ENCODE measurements at regions of chr17 and their contacts with region 1.

Region 1: DNA sequence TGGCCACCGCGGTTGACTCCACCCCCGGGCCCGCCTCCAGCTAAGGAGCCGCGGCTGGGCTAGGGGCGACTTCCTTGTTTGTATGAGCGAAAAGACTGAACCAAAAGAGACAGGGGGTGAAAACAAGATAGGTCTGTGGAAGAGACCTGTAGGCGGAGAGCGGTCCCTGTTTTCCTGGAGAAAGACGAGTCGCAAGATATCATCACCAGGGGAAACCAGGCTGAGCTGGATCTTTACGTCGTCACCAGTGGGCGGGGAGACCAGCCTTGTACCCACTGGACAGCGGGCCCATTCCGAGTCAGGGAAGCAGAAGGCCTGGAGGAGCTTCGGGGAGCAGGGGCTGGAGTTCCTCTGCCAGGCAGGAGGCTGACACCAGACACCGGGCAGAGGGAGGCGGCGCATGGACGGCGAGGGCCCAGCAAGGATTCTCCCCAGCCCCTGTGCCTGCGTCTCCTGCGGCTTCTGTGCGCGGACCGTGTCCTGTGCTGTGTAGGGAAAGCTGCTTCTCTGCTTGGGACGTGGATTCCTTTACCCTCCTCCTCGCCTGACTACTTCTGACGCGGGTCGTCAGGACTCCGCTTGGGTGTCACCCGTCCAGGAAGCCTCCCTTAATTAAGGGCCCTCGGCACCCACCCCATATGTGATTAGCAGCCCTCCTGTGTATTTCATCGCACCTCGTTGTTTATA is 10.3 kb upstream of the ARL4D start:
- DNase-seq: peak; percentile 94
- H3K4me3 ChIP-seq: peak overlapping the region; percentile 57 to 71 (median 64)
- H3K27ac ChIP-seq: peak overlapping the region; percentile 98 to 99 (median 99)
- H3K4me1 ChIP-seq: peaks cover 6 to 21% (median 10%) of the 10 kb centered on the region in 4 donors
- H3K27me3 ChIP-seq: no peaks in the 10 kb centered on the region
- CTCF ChIP-seq: no peak
- EP300 ChIP-seq: no peak
- POLR2A ChIP-seq: peak; percentile 98

Region 2: GRCh38 chr17:43324205-43324893 is 64.2 kb before region 1 on chr17:
- in situ Hi-C with region 1: no loop called
- intact Hi-C with region 1: no loop called
- DNase-seq: no peak
- H3K4me3 ChIP-seq: no peak overlapping the region
- H3K27ac ChIP-seq: no peak overlapping the region
- H3K4me1 ChIP-seq: peaks cover 0 to 4% (median 0%) of the 10 kb centered on the region in 4 donors
- H3K27me3 ChIP-seq: peaks cover 8% of the 10 kb centered on the region
- CTCF ChIP-seq: no peak
- EP300 ChIP-seq: no peak
- POLR2A ChIP-seq: no peak

Region 3: GRCh38 chr17:43367737-43368242 is 20.7 kb before region 1 on chr17:
- in situ Hi-C with region 1: no loop called
- intact Hi-C with region 1: loop called (anchors 2 kb)
- DNase-seq: no peak
- H3K4me3 ChIP-seq: peak overlapping the region in 3 of 4 donors; percentile 49 to 72 (median 71)
- H3K27ac ChIP-seq: peak overlapping the region; percentile 98 to 100 (median 100)
- H3K4me1 ChIP-seq: peaks cover 13 to 29% (median 23%) of the 10 kb centered on the region in 4 donors
- H3K27me3 ChIP-seq: no peaks in the 10 kb centered on the region
- CTCF ChIP-seq: no peak
- EP300 ChIP-seq: no peak
- POLR2A ChIP-seq: no peak

Region 4: DNA sequence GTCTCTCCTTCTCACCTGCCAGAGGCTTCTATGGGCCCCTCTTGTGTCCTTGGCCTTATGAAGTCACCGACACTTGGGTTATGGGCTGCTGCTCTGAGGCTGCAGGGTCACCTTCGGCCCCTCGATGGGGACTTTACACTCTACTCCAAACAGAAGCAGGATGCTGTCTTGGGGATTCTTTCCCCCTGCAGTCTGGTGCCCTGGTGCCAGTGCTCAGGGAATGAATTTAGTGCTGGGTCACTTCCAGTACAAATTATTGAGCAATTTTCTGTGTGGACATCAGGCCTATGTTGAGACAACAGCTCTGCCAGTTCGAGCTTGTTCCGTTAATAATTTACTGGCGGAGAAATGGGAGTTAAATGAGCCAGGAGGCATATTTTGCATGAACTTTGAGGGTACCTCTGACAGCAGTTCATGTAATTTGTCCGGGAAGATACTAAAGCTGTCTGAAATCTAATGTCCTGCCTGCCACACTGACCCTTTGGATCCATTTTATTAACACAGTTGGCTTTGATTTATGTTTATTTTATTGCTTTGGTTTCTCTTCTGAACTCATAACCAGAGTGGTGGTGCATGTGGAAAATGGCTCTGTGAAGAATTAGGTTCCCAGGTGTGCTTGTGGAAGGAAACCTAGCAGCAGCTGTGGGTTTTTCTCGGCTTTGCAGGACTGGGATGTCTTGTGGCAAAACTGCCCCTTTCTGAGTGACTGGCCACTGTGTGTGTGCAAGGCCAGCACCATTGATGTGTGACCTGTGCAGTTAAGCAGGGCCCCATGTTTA is 61.2 kb after region 1 on chr17:
- in situ Hi-C with region 1: no loop called
- intact Hi-C with region 1: no loop called
- DNase-seq: no peak
- H3K4me3 ChIP-seq: no peak overlapping the region
- H3K27ac ChIP-seq: no peak overlapping the region
- H3K4me1 ChIP-seq: peaks cover 0 to 5% (median 0%) of the 10 kb centered on the region in 4 donors
- H3K27me3 ChIP-seq: no peaks in the 10 kb centered on the region
- CTCF ChIP-seq: no peak
- EP300 ChIP-seq: no peak
- POLR2A ChIP-seq: no peak